ENCODE measurements at regions of chr16 and their contacts with region 1.

Region 1: GRCh38 chr16:52906281-52906680 is 146.4 kb downstream of the CHD9NB start:
- DNase-seq: no peak
- ATAC-seq: peak in 1 of 8 donors; percentile 20
- H3K4me3 ChIP-seq: no peak overlapping the region
- H3K27ac ChIP-seq: no peak overlapping the region
- H3K4me1 ChIP-seq: peaks cover 0 to 4% (median 0%) of the 10 kb centered on the region in 9 donors
- H3K27me3 ChIP-seq: no peaks in the 10 kb centered on the region
- CTCF ChIP-seq: no peak

Region 2: DNA sequence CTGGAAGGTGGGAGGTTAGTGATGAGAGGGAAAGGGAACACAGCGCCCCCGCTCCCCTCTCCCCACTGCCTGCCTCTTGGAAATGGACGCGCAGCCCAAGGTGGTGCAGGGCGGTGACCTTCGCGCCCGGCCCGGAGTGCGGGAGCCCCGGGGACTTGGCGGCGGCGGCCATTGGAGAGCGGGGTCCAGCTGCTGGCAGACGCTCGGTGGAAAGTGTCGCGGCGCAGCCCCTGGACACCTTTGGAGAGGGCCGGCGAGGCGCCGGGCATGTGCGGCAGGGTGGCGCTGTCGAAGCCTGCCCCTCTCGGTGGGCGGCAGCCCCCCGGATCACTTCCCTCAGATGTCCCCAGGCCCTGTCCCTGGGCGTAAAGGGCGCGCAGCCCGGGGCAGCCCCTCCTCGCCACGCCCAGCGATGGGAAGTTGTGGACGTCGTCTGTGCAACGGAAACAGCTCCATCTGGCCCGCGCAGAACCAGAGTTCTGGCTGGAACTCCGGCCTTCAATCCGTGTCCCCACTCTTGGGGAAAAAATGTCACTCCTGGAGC is 1771.9 kb before region 1 on chr16:
- intact Hi-C with region 1: loop called in 1 of 10 experiments (anchors 5 kb)
- DNase-seq: no peak
- ATAC-seq: peak in 2 of 8 donors; percentile 30 to 51
- H3K4me3 ChIP-seq: peak overlapping the region in 6 of 10 donors; percentile 5 to 39 (median 22)
- H3K27ac ChIP-seq: no peak overlapping the region
- H3K4me1 ChIP-seq: peaks cover 0 to 7% (median 0%) of the 10 kb centered on the region in 9 donors
- H3K27me3 ChIP-seq: peaks cover 11 to 71% (median 59%) of the 10 kb centered on the region in 7 donors
- CTCF ChIP-seq: no peak

Region 3: GRCh38 chr16:52643006-52643405 is 263.3 kb before region 1 on chr16:
- intact Hi-C with region 1: no loop called
- DNase-seq: no peak
- ATAC-seq: no peak
- H3K4me3 ChIP-seq: no peak overlapping the region
- H3K27ac ChIP-seq: no peak overlapping the region
- H3K4me1 ChIP-seq: no peaks in the 10 kb centered on the region
- H3K27me3 ChIP-seq: no peaks in the 10 kb centered on the region
- CTCF ChIP-seq: no peak

Region 4: DNA sequence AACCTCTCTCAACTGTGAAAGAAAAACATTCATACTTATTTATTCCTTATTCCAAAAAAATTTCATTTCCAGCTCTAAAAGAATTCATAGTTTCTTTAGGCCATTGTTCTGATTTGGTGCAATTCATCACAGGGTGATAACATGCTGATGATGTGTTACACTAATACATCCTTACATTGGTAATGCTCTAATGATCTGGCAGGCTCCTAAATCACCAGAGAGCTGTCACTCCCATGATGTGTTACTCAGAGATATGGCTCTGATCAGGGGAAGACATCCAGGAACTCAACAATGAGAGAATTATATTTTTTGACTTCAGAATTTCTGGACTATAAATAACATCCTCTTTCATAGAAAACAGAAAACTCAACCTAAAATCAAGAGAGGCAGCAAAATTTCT is 62.9 kb before region 1 on chr16:
- intact Hi-C with region 1: no loop called
- DNase-seq: no peak
- ATAC-seq: no peak
- H3K4me3 ChIP-seq: no peak overlapping the region
- H3K27ac ChIP-seq: no peak overlapping the region
- H3K4me1 ChIP-seq: no peaks in the 10 kb centered on the region
- H3K27me3 ChIP-seq: peaks cover 0 to 5% (median 0%) of the 10 kb centered on the region in 7 donors
- CTCF ChIP-seq: no peak

Region 5: DNA sequence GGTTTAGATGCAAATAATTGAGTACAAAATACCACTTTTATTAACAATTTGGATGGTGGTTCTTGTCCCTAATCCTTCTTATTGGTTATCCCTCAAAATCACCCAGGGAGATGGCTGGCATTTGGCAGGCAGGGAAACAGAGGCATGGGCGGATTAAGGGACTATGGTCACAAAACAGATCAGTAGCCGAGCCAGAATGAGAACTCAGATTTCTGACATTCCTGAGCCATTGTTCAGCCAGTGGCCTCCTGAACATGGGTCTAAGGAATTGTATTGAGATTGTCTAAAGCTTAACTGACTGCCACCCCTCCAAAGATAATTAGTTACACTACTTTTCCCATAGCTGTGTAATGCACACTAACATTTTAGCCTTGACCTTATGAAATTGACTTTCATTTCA is 58.0 kb after region 1 on chr16:
- intact Hi-C with region 1: loop called in 1 of 10 experiments (anchors 10 kb)
- DNase-seq: no peak
- ATAC-seq: no peak
- H3K4me3 ChIP-seq: no peak overlapping the region
- H3K27ac ChIP-seq: no peak overlapping the region
- H3K4me1 ChIP-seq: no peaks in the 10 kb centered on the region
- H3K27me3 ChIP-seq: no peaks in the 10 kb centered on the region
- CTCF ChIP-seq: no peak

Measured in heart right ventricle (tissue), 16 donors.